ENCODE measurements at regions of chr1 and their contacts with region 1.

Region 1: DNA sequence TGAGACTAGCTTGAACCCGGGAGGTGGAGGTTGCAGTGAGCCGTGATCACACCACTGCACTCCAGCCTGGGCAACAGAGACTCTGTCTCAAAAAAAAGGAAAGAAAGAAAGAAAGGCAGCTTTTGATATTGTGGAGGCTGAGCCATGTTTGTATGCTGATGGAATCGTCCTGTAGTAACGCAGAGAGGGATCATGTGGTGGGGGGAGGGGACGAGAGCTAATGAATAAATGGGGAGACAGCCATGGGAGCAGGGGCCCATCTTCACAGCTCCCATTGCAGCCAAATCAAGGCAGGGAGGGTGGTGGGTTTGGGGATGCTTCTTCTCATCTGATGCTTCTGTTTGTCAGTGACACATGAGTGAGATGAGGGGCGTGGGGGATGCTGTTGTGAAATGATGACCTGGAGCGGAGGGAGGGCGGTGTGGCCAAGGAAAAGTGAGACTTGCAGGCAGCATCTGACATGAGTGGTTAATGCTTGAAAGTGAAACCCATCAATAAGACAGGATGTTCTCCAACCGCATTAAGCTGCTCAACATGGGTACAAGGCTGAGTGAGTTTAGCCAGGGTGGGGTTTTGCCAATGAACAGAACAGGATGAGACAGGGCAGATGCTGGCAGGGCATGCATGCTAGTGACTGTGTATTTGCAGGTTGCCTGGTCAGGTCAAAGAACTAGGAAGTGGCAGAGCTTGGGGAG is 16.7 kb downstream of the SPATA21 start:
- DNase-seq: peak; percentile 84
- ATAC-seq: peak; percentile 97
- H3K4me3 Mint-ChIP-seq: peak overlapping the region; percentile 38
- H3K27ac Mint-ChIP-seq: peak overlapping the region; percentile 88
- H3K4me1 Mint-ChIP-seq: peaks cover 30% of the 10 kb centered on the region
- H3K27me3 Mint-ChIP-seq: no peaks in the 10 kb centered on the region

Region 2: DNA sequence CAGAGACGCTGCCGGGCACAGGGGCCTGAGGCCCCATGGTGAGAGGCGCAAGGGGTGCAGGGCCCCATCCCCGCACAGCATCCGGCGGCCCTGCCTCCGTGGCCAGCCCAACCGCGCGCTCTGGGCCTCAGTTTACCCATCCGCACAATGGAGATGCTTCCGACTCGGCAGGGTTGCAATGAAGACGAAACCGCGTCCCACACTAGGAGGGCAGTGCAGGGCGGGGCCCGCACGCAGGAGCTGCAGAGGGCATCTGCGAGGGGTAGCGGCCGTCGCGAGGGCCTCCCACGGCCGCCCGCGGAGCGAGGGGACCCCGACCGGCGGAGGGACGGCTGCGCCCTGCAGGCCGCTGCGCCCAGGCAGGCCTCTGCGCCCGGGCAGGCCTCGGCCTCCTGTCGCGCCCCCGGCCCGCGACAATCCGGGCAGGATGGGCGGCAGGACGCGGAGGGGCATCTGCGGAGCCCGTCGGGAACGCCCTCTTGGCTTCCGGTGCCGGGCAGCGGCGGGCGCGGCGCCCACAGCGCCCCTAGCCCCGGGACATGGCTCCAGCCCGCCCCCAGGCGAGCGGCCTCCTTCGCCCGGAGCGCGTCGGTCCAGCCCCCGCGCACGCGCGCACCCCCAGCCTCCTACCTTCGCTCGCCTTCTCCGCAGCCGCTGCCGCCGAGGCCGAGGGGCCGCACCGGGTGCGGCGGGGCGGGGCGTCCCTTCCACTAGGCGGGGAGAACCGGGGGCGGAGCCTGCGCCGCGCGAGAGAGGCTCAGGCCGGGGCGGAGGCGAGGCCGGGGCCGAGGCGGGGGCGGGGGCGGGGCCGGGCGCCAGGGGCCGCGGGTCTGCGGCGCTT is 78.2 kb after region 1 on chr1:
- CTCF ChIA-PET with region 1: no interaction called
- POLR2A ChIA-PET with region 1: no interaction called
- intact Hi-C with region 1: loop called in 1 of 2 experiments (anchors 5 kb)
- DNase-seq: peak; percentile 91
- ATAC-seq: peak; percentile 94
- H3K4me3 Mint-ChIP-seq: peak overlapping the region; percentile 74
- H3K27ac Mint-ChIP-seq: no peak overlapping the region
- H3K4me1 Mint-ChIP-seq: peaks cover 10% of the 10 kb centered on the region
- H3K27me3 Mint-ChIP-seq: no peaks in the 10 kb centered on the region

Region 3: DNA sequence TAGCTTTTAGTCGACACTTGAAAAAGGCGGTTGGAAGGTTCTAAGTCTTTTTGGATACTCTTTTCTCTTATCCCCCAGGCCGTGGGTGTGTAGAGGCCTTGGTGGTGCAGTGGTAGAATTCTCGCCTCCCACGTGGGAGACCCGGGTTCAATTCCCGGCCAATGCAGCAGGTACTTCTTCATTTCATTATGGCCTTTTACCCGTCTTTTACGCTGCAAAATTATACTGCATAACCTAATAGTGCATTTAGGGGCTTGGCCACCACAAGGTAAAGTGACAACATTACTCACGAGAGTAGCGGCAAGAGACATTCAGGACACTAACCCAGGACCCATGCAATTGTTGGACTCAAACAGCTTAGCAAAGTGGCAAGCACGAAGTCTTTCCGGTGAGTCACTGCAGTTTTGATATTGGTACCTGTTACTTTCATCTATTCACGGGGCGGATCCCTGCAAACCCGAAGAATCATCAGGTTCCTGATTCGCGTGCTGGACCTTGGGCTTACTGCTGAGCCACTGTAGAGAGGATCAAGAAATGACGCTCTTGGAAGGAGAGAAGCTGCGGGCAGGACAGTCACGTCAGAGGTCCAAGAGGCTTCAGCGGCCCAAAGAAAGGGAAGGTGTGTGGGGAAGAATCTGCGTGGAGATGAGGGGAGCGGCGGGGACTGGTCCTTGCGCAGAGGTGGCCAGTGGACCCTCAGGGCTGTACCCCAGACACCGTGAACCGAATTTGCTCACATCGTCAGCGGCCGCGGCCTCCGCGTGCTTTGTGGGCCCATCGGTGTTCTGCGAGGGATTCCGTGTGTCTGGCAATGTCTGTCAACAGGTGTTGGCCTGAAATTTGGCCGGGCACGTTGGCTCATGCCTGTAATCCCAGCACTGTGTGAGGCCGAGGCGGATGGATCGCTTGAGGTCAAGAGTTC is 306.9 kb after region 1 on chr1:
- CTCF ChIA-PET with region 1: no interaction called
- POLR2A ChIA-PET with region 1: no interaction called
- intact Hi-C with region 1: loop called in 1 of 2 experiments (anchors 10 kb)
- DNase-seq: peak; percentile 87
- ATAC-seq: peak; percentile 90
- H3K4me3 Mint-ChIP-seq: no peak overlapping the region
- H3K27ac Mint-ChIP-seq: no peak overlapping the region
- H3K4me1 Mint-ChIP-seq: no peaks in the 10 kb centered on the region
- H3K27me3 Mint-ChIP-seq: peaks cover 5% of the 10 kb centered on the region